ENCODE measurements at regions of chr17 and their contacts with region 1.

Region 1: GRCh38 chr17:79393358-79394202 is 217.3 kb downstream of the RBFOX3 start:
- DNase-seq: peak; percentile 57 to 99
- H3K4me3 ChIP-seq: no peak overlapping the region
- H3K27ac ChIP-seq: no peak overlapping the region
- H3K4me1 ChIP-seq: no peaks in the 10 kb centered on the region; a peak in 2 of 7 replicates
- H3K27me3 ChIP-seq: peaks cover 2 to 16% (median 7%) of the 10 kb centered on the region in 4 experiments
- CTCF ChIP-seq: peak; percentile 98 to 100 (median 100)
- EP300 ChIP-seq: no peak
- POLR2A ChIP-seq: no peak
- RAD21 ChIP-seq: peak; percentile 98 to 99

Region 2: GRCh38 chr17:79065105-79065670 is 328.4 kb before region 1 on chr17:
- CTCF ChIA-PET with region 1: interaction called, 12 read pairs
- POLR2A ChIA-PET with region 1: no interaction called
- DNase-seq: peak in 1 of 2 experiments; percentile 76
- H3K4me3 ChIP-seq: no peak overlapping the region
- H3K27ac ChIP-seq: no peak overlapping the region
- H3K4me1 ChIP-seq: no peaks in the 10 kb centered on the region
- H3K27me3 ChIP-seq: peaks cover 0 to 2% (median 0%) of the 10 kb centered on the region in 4 experiments; a peak in 1 of 7 replicates
- CTCF ChIP-seq: peak; percentile 30 to 67 (median 64)
- EP300 ChIP-seq: no peak
- POLR2A ChIP-seq: no peak
- RAD21 ChIP-seq: peak; percentile 74 to 76

Region 3: DNA sequence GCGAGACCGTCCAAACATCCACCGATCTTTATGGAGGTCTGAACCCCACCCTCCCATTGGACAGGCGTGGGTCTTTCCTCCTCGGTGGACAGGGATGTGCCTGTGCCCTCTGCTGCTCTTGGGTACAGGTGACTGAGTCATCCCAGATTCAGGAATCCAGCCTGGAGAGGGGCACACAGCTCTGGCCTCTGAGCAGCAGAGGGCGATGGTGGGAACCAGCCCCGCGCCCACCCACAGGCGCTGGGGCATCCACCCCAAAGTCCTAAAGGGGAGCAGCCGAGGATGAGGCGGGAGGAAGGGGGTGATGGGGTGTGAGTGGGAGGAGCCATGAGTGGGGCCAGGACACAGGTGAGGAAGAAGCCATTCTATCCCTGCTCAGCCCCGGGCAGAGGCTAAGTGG is 284.0 kb before region 1 on chr17:
- CTCF ChIA-PET with region 1: interaction called, 37 read pairs
- POLR2A ChIA-PET with region 1: interaction called, 5 read pairs
- DNase-seq: peak in 1 of 2 experiments; percentile 72
- H3K4me3 ChIP-seq: no peak overlapping the region
- H3K27ac ChIP-seq: no peak overlapping the region
- H3K4me1 ChIP-seq: peaks cover 0 to 3% (median 0%) of the 10 kb centered on the region in 4 experiments; a peak in 3 of 7 replicates
- H3K27me3 ChIP-seq: no peaks in the 10 kb centered on the region
- CTCF ChIP-seq: peak; percentile 73 to 78 (median 78)
- EP300 ChIP-seq: no peak
- POLR2A ChIP-seq: no peak
- RAD21 ChIP-seq: peak; percentile 52 to 58

Region 4: DNA sequence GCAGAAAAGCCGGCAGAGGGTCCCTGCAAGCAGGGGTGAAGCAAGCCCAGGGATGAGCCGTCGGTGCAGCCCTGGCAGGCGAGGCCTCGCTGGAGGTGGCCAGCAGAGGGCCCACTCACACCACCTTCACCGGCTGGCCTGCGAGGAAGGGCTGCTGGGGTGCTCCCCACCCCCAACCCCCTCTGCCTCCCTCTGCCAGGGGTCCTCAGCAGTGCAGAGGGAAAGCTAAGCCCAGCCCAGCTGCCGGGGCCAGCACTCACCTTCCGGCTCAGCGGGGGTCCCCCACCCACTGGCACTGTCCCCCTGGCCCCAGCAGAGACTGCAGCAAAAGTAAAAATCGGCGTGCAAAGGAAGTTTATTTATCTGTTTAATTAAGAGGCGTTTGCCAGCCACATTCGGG is 205.5 kb before region 1 on chr17:
- CTCF ChIA-PET with region 1: interaction called, 272 read pairs
- POLR2A ChIA-PET with region 1: interaction called, 5 read pairs
- DNase-seq: peak; percentile 38 to 89
- H3K4me3 ChIP-seq: no peak overlapping the region
- H3K27ac ChIP-seq: no peak overlapping the region
- H3K4me1 ChIP-seq: peaks cover 10 to 40% (median 26%) of the 10 kb centered on the region in 4 experiments
- H3K27me3 ChIP-seq: peaks cover 3 to 24% (median 17%) of the 10 kb centered on the region in 4 experiments
- CTCF ChIP-seq: peak; percentile 91 to 97 (median 95)
- EP300 ChIP-seq: no peak
- POLR2A ChIP-seq: no peak
- RAD21 ChIP-seq: peak; percentile 97

Region 5: GRCh38 chr17:79248843-79249493 is 144.6 kb before region 1 on chr17:
- CTCF ChIA-PET with region 1: interaction called, 13 read pairs
- POLR2A ChIA-PET with region 1: no interaction called
- DNase-seq: no peak
- H3K4me3 ChIP-seq: no peak overlapping the region
- H3K27ac ChIP-seq: no peak overlapping the region
- H3K4me1 ChIP-seq: peaks cover 0 to 10% (median under 1%) of the 10 kb centered on the region in 4 experiments; a peak in 1 of 7 replicates
- H3K27me3 ChIP-seq: peaks cover 0 to 5% (median 0%) of the 10 kb centered on the region in 4 experiments; a peak in 1 of 7 replicates
- CTCF ChIP-seq: peak in 2 of 3 experiments; percentile 1 to 10; a peak in 1 of 4 replicates
- EP300 ChIP-seq: no peak
- POLR2A ChIP-seq: no peak
- RAD21 ChIP-seq: peak; percentile 9 to 20; a peak in 1 of 4 replicates

Region 6: GRCh38 chr17:79372470-79373238 is 20.9 kb before region 1 on chr17:
- CTCF ChIA-PET with region 1: interaction called, 108 read pairs
- POLR2A ChIA-PET with region 1: no interaction called
- DNase-seq: no peak
- H3K4me3 ChIP-seq: no peak overlapping the region
- H3K27ac ChIP-seq: no peak overlapping the region
- H3K4me1 ChIP-seq: peaks cover 0 to 3% (median 2%) of the 10 kb centered on the region in 4 experiments; a peak in 2 of 7 replicates
- H3K27me3 ChIP-seq: no peaks in the 10 kb centered on the region
- CTCF ChIP-seq: no peak
- EP300 ChIP-seq: no peak
- POLR2A ChIP-seq: no peak
- RAD21 ChIP-seq: no peak

Region 7: GRCh38 chr17:79537061-79537460 is 143.5 kb after region 1 on chr17:
- CTCF ChIA-PET with region 1: no interaction called
- POLR2A ChIA-PET with region 1: no interaction called
- DNase-seq: no peak
- H3K4me3 ChIP-seq: no peak overlapping the region
- H3K27ac ChIP-seq: no peak overlapping the region
- H3K4me1 ChIP-seq: peaks cover 2 to 10% (median 5%) of the 10 kb centered on the region in 4 experiments
- H3K27me3 ChIP-seq: no peaks in the 10 kb centered on the region
- CTCF ChIP-seq: no peak
- EP300 ChIP-seq: no peak
- POLR2A ChIP-seq: no peak
- RAD21 ChIP-seq: no peak

Measured in H1 (cell line).